HCT116 (cell line): ENCODE measurements at regions of chrX and their contacts with region 1.

Region 1: DNA sequence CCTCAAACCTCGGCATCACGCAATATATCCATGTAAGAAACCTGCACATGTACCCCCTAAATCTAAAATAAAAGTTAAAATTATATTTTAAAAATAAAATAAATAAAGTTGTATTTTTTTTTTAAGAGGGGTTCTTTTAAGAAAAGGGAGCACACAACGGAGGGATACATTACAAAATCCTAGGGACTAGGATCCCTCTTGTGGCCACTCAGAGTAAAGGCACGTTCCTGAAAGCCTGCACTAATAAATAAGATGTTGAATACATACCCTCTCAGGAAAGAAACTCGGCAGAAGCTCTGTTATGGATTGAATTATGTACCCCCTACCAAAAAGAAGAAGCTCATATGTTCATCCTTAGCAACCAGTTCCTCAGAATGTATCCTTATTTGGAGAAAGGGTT is 50.9 kb upstream of the PRDX4 start:
- DNase-seq: no peak
- ATAC-seq: peak; percentile 72
- H3K4me3 ChIP-seq: no peak overlapping the region
- H3K27ac ChIP-seq: no peak overlapping the region
- H3K4me1 ChIP-seq: no peaks in the 10 kb centered on the region
- H3K27me3 ChIP-seq: no peaks in the 10 kb centered on the region
- CTCF ChIP-seq: peak; percentile 15 to 53 (median 41); a peak in 5 of 6 replicates
- POLR2A ChIP-seq: no peak
- RAD21 ChIP-seq: peak; percentile 53

Region 2: GRCh38 chrX:23008431-23009099 is 607.8 kb before region 1 on chrX:
- CTCF ChIA-PET with region 1: no interaction called
- POLR2A ChIA-PET with region 1: no interaction called
- RAD21 ChIA-PET with region 1: no interaction called
- intact Hi-C with region 1: loop called (anchors 5 kb)
- DNase-seq: peak; percentile 6
- ATAC-seq: peak; percentile 58
- H3K4me3 ChIP-seq: no peak overlapping the region
- H3K27ac ChIP-seq: no peak overlapping the region
- H3K4me1 ChIP-seq: no peaks in the 10 kb centered on the region
- H3K27me3 ChIP-seq: no peaks in the 10 kb centered on the region
- CTCF ChIP-seq: peak; percentile 19 to 52 (median 52); a peak in 4 of 6 replicates
- POLR2A ChIP-seq: no peak
- RAD21 ChIP-seq: peak; percentile 57; the same call in 1 of the 2 replicates

Region 3: GRCh38 chrX:23403853-23404252 is 212.5 kb before region 1 on chrX:
- CTCF ChIA-PET with region 1: no interaction called
- POLR2A ChIA-PET with region 1: no interaction called
- RAD21 ChIA-PET with region 1: no interaction called
- intact Hi-C with region 1: loop called (anchors 5 kb)
- DNase-seq: peak; percentile 6
- ATAC-seq: peak; percentile 53
- H3K4me3 ChIP-seq: no peak overlapping the region
- H3K27ac ChIP-seq: no peak overlapping the region
- H3K4me1 ChIP-seq: no peaks in the 10 kb centered on the region
- H3K27me3 ChIP-seq: no peaks in the 10 kb centered on the region
- CTCF ChIP-seq: peak; percentile 20 to 40 (median 23); a peak in 3 of 6 replicates
- POLR2A ChIP-seq: no peak
- RAD21 ChIP-seq: peak; percentile 47

Region 4: DNA sequence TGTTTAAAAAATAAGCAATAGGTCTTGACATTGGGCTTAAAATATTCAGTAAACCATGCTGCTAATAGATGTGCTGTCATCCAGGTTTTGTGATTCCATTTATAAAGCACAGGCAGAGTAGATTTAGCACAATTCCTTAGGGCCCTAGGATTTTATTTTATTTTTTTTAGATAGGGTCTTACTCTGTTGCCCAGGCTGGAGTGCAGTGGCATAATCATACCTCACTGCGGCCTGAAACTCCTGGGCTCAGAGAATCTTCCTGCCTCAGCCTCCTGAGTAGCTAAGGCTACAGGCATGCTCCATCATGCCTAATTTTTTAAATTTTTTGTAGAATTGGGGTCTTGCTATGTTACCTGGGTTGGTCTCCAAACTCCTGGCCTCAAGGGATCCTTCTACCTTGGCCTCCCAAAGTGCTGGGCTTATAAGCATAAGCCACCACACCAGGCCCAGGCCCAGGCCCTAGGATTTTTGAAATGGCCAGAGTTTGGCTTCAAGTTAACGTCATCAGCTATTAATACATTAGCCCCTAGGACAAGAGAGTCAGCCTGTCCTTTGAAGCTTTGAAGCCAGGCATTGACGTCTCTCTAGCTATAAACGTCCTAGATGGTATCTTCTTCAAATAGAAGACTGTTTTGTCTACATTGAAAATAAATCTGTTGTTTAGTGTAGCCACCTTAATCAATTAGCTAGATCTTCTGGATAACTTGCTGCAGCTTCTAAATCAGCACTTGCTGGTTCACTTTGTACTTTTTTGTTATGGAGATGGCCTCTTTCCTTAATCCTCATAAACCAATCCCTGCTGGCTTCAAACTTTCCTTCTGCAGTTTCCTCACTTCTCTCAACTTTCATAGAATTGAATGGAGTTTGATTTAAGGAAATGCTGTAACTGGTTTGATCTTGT is 474.2 kb after region 1 on chrX:
- CTCF ChIA-PET with region 1: no interaction called
- POLR2A ChIA-PET with region 1: no interaction called
- RAD21 ChIA-PET with region 1: no interaction called
- intact Hi-C with region 1: no loop called
- DNase-seq: no peak
- ATAC-seq: no peak
- H3K4me3 ChIP-seq: no peak overlapping the region
- H3K27ac ChIP-seq: no peak overlapping the region
- H3K4me1 ChIP-seq: no peaks in the 10 kb centered on the region; a peak in 1 of 4 replicates
- H3K27me3 ChIP-seq: no peaks in the 10 kb centered on the region
- CTCF ChIP-seq: no peak
- POLR2A ChIP-seq: no peak
- RAD21 ChIP-seq: no peak